Psoas muscle (tissue), 8 donors: ENCODE measurements at regions of chr6 and their contacts with region 1.

Region 1: GRCh38 chr6:118451839-118452238 is 96.3 kb upstream of the PLN start:
- DNase-seq: no peak
- ATAC-seq: no peak
- H3K4me3 ChIP-seq: no peak overlapping the region
- H3K27ac ChIP-seq: no peak overlapping the region
- H3K4me1 ChIP-seq: no peaks in the 10 kb centered on the region
- H3K27me3 ChIP-seq: no peaks in the 10 kb centered on the region
- CTCF ChIP-seq: no peak

Region 2: GRCh38 chr6:118408863-118409262 is 43.0 kb before region 1 on chr6:
- intact Hi-C with region 1: loop called in 1 of 2 experiments (anchors 5 kb)
- DNase-seq: no peak
- ATAC-seq: no peak
- H3K4me3 ChIP-seq: no peak overlapping the region
- H3K27ac ChIP-seq: no peak overlapping the region
- H3K4me1 ChIP-seq: no peaks in the 10 kb centered on the region
- H3K27me3 ChIP-seq: no peaks in the 10 kb centered on the region
- CTCF ChIP-seq: no peak